Heart right ventricle (tissue), 16 donors: ENCODE measurements at regions of chr12 and their contacts with region 1.

Region 1: DNA sequence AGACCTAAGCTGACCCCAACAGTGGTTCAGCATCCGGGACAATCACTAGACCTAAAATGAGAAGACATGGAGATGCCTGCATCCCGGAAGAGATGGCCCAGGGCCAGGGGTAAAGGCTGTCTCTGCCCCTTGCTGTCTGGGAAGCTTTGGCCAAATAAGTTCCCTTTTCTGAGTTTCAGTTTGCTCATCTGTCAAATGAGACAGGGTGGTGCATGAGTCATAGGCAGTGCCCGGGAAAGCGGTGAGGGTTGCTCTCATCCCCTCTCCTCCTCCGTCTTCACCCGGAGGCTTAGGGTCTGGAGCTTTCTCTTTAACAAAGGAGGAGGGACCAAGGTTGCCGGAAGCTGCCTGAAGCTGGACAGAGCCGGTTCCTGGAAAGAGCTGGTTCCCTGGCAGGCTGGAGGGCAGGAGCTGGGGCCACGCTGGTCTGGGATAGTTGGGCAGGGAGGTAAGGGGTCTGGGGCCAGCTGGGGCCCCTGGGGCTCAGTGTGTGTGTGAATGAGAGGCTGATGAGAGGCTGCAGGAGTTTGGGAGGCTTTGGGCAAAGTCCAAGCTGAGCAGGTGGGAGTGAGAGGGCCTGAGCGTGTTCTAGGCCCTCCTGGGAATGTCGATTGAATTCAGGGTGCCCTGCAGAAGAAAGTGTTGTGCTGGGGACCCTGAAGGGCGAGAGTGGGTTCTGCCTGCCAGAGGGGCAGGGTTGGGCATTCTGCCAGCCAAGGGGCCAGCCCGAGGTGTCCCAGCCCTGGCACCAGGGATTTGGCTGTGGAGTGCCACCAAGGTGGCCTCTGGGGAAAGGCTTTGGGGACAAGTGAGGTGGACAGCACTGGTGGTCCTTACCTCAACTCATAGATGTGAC is at the start of gene SDSL:
- DNase-seq: peak; percentile 56 to 68
- ATAC-seq: peak; percentile 82 to 93 (median 90)
- H3K4me3 ChIP-seq: peak within 1 kb of the TSS in 9 of 10 donors; percentile 18 to 71 (median 60)
- H3K27ac ChIP-seq: peak within 1 kb of the TSS in 6 of 10 donors; percentile 73 to 93 (median 80)
- H3K4me1 ChIP-seq: peaks cover 0 to 44% (median 9%) of the 10 kb centered on the region in 9 donors
- H3K27me3 ChIP-seq: no peaks in the 10 kb centered on the region
- CTCF ChIP-seq: no peak
- total RNA-seq, gene SDSL: 4.0 to 23.4 (median 15.3) TPM

Region 2: GRCh38 chr12:113203852-113204760 is 218.2 kb before region 1 on chr12:
- intact Hi-C with region 1: loop called in 9 of 10 experiments (anchors 5 to 10 kb)
- DNase-seq: no peak
- ATAC-seq: no peak
- H3K4me3 ChIP-seq: no peak overlapping the region
- H3K27ac ChIP-seq: peak overlapping the region in 3 of 10 donors; percentile 17 to 45 (median 43)
- H3K4me1 ChIP-seq: peaks cover 0 to 68% (median 17%) of the 10 kb centered on the region in 9 donors
- H3K27me3 ChIP-seq: no peaks in the 10 kb centered on the region
- CTCF ChIP-seq: no peak

Region 3: GRCh38 chr12:113456761-113457160 is 34.5 kb after region 1 on chr12:
- intact Hi-C with region 1: no loop called
- DNase-seq: no peak
- ATAC-seq: no peak
- H3K4me3 ChIP-seq: no peak overlapping the region
- H3K27ac ChIP-seq: no peak overlapping the region
- H3K4me1 ChIP-seq: no peaks in the 10 kb centered on the region
- H3K27me3 ChIP-seq: peaks cover 0 to 96% (median 62%) of the 10 kb centered on the region in 7 donors
- CTCF ChIP-seq: no peak